AG04449 (cell line): ENCODE measurements at regions of chr7 and their contacts with region 1.

Region 1: GRCh38 chr7:7103343-7104313 is 78.7 kb upstream of the C1GALT1 start:
- DNase-seq: peak; percentile 28
- H3K4me3 ChIP-seq: no peak overlapping the region
- CTCF ChIP-seq: peak; percentile 33

Region 2: GRCh38 chr7:6545398-6546126 is 558.1 kb before region 1 on chr7:
- CTCF ChIA-PET with region 1: no interaction called
- POLR2A ChIA-PET with region 1: no interaction called
- DNase-seq: no peak
- H3K4me3 ChIP-seq: no peak overlapping the region
- CTCF ChIP-seq: no peak

Region 3: DNA sequence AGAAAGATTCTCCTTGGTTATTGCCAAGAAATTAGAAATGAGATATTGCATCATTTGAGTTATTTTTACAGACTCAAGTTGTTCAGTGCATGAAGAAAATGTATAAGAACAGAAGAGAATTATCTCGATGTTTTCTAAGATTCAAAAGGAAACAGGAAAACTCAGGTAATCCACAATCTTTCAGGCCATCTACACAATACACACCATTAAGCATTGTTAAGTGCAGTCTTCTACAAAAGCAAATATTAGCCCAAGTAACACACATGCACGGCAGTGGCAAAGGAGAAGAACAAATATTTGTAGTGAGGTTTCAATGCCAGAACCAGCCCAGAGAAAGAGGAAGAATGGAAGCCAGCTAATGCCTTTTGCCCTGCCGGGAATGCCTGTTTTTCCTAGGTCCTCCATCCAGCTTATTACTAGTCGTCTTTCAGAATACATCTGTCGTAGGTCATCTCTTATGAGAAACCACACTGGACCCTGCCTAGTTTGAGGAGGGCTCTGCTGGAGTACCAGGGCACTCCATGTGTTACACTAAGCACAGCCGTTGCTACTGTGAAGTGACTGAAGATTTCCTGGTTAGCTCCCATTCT is 11.2 kb after region 1 on chr7:
- CTCF ChIA-PET with region 1: interaction called, 33 read pairs
- POLR2A ChIA-PET with region 1: no interaction called
- DNase-seq: no peak
- H3K4me3 ChIP-seq: no peak overlapping the region
- CTCF ChIP-seq: no peak

Region 4: DNA sequence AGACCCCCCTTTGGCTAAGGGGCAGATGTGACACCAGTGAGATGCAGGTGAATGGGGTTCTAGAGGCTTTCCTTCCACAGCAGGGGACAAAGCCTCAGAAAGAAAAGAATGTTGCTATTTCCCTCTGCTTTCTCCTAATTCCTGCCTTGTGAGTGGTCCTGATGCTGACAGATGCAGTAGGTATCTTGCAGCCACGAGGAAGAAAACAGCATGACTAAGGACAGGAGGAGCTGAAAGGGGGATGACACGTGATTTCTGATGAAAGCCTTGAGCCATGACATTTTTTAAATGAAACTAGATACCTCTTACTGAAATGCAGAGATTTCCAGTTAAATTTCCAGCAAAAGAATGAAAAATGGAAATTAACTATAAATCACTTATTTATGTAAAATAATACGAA is 171.2 kb after region 1 on chr7:
- CTCF ChIA-PET with region 1: interaction called, 12 read pairs
- POLR2A ChIA-PET with region 1: no interaction called
- DNase-seq: no peak
- H3K4me3 ChIP-seq: no peak overlapping the region
- CTCF ChIP-seq: no peak

Region 5: GRCh38 chr7:7424151-7424873 is 320.7 kb after region 1 on chr7:
- CTCF ChIA-PET with region 1: interaction called, 160 read pairs
- POLR2A ChIA-PET with region 1: no interaction called
- DNase-seq: no peak
- H3K4me3 ChIP-seq: peak overlapping the region; percentile 52
- CTCF ChIP-seq: peak; percentile 81

Region 6: DNA sequence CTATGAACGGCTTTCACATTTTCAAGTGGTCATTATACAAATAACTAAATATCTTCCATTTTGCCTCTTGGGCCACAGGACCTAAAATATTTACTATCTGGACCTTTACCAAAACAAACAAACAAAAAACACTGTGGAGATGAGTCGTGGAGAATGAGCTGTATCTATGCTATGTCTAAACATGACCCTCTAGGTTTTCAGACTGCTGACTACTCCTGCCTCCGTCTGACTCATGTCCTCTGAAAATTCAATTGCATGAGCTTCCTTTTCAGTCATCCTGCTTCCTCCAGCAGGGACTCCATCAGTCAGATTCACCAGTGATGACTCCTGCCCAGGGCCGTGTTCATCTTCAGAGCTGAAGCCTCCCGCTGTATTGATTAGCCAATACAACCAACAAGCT is 335.2 kb after region 1 on chr7:
- CTCF ChIA-PET with region 1: interaction called, 17 read pairs
- POLR2A ChIA-PET with region 1: no interaction called
- DNase-seq: peak; percentile 97
- H3K4me3 ChIP-seq: no peak overlapping the region
- CTCF ChIP-seq: no peak

Region 7: GRCh38 chr7:7535691-7536090 is 432.1 kb after region 1 on chr7 and contains the start of gene COL28A1:
- CTCF ChIA-PET with region 1: interaction called, 17 read pairs
- POLR2A ChIA-PET with region 1: no interaction called
- DNase-seq: no peak
- H3K4me3 ChIP-seq: no peak within 1 kb of the TSS
- CTCF ChIP-seq: no peak